Posterior cingulate gyrus (tissue), 11 donors: ENCODE measurements at regions of chr2 and their contacts with region 1.

Region 1: DNA sequence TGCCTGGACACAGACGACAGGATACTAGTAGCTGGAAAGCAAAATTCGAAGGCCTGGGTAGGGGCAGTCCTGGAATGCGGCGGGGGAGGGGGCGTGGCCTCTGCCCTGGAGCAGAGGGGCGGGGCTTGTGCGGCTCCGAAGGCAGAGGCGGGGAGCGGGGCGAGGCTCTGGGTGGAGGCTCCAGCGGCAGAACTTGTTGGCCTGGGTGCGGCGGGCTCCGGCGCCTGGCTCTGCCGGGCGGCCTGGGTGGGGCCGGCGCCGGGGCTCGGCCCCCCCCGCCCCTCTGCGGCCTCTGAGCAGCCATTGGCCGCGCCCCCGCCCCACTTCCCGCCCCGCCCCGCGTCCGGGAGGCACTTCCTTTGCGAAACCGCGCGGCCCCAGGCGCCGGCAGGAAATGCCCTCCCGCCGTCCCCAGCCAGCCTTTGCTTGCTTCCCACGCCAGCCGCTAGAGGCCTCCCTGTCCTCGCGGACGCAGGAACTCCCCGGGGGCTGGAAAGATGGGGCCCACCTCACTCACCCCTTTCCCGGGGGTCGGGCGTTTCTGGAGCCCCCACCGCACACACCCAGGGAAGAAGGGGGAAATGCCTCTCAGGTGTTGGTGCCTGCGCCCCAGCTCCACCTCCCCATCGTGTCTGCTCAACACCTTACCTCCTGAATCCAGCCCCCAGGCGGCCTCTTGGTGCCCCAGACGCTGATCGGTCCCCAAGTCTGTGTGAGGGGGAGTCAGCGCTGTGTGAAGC is 6.7 kb downstream of the CTDSP1 start:
- DNase-seq: peak; percentile 93 to 99 (median 96)

Region 2: GRCh38 chr2:218466016-218466521 is 59.7 kb after region 1 on chr2:
- intact Hi-C with region 1: loop called (anchors 1 kb)
- DNase-seq: no peak

Region 3: GRCh38 chr2:218568190-218569037 is 162.0 kb after region 1 on chr2 and contains the starts of genes CNOT9 and USP37:
- intact Hi-C with region 1: loop called (anchors 2 kb)
- DNase-seq: peak; percentile 99 to 100 (median 99)

Region 4: GRCh38 chr2:218648088-218648786 is 241.9 kb after region 1 on chr2:
- intact Hi-C with region 1: loop called (anchors 1 kb)
- DNase-seq: peak in 9 of 10 donors; percentile 36 to 91 (median 42)